Kidney (tissue), 22 donors: ENCODE measurements at regions of chr12 and their contacts with region 1.

Region 1: GRCh38 chr12:113174461-113175384 is 10.6 kb downstream of the DDX54 start:
- DNase-seq: peak; percentile 71 to 88 (median 78)
- H3K4me3 ChIP-seq: no peak overlapping the region
- H3K27ac ChIP-seq: no peak overlapping the region
- H3K4me1 ChIP-seq: no peaks in the 10 kb centered on the region
- H3K27me3 ChIP-seq: no peaks in the 10 kb centered on the region
- CTCF ChIP-seq: peak; percentile 93

Region 2: GRCh38 chr12:112891093-112892024 is 283.4 kb before region 1 on chr12:
- intact Hi-C with region 1: loop called (anchors 10 kb)
- DNase-seq: no peak
- H3K4me3 ChIP-seq: no peak overlapping the region
- H3K27ac ChIP-seq: no peak overlapping the region
- H3K4me1 ChIP-seq: no peaks in the 10 kb centered on the region
- H3K27me3 ChIP-seq: no peaks in the 10 kb centered on the region
- CTCF ChIP-seq: no peak